Transverse colon (tissue), 4 donors: ENCODE measurements at regions of chr1 and their contacts with region 1.

Region 1: DNA sequence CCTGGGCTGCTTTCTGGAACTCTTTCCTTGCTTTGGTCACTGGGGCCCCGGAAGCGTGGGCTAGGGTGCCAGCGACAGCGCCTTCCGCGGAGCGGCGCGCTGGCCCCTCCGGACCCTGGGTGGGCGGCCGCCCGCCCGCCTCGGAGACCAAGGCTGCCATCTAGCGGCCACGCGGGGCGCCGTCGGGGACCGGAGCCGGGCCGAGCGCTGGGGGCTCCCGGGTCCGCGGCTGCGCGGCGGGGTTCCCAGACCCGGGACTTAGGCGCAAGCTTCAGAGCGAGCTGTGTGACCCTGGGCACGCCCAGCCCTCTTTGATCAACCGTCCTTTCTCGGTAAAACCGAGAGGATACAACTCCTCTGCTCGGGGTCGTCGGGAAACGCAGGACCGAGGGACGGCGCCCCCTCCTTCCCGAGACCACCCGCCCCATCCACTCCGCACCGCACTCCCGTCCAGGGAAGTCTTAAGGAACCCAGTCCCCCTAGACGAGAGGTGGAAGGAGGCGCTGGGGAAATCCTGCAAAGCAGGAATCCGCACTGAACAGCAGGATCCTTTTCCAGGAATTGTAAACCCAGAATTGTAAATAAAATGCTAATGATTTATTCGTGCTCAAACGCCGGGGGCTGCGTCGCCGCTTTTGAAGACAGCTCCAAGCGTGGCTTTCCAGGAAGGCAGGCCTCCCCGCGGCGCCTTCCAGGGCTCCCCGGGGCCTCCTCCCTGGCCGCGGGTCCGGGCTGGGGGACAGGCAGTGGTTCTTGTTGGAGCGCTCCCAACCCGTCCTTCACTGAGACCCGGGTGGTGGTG is 41.2 kb downstream of the RRAGC start:
- DNase-seq: peak; percentile 15
- H3K4me3 ChIP-seq: peak overlapping the region in 3 of 4 donors; percentile 6 to 35 (median 15)
- H3K27ac ChIP-seq: no peak overlapping the region
- H3K4me1 ChIP-seq: peaks cover 8 to 19% (median 12%) of the 10 kb centered on the region in 4 donors
- H3K27me3 ChIP-seq: peaks cover 82% of the 10 kb centered on the region
- CTCF ChIP-seq: peak in 4 of 5 experiments; percentile 30 to 76 (median 70)
- EP300 ChIP-seq: no peak
- POLR2A ChIP-seq: no peak

Region 2: GRCh38 chr1:38071312-38072256 is 746.8 kb before region 1 on chr1:
- in situ Hi-C with region 1: loop called in 1 of 4 experiments (anchors 25 kb)
- intact Hi-C with region 1: loop called (anchors 5 kb)
- DNase-seq: no peak
- H3K4me3 ChIP-seq: no peak overlapping the region
- H3K27ac ChIP-seq: no peak overlapping the region
- H3K4me1 ChIP-seq: no peaks in the 10 kb centered on the region
- H3K27me3 ChIP-seq: peaks cover 46% of the 10 kb centered on the region
- CTCF ChIP-seq: peak in 1 of 5 experiments; percentile 13
- EP300 ChIP-seq: no peak
- POLR2A ChIP-seq: no peak

Region 3: GRCh38 chr1:38608202-38608864 is 210.0 kb before region 1 on chr1:
- in situ Hi-C with region 1: loop called in 1 of 4 experiments (anchors 25 kb)
- intact Hi-C with region 1: no loop called
- DNase-seq: no peak
- H3K4me3 ChIP-seq: no peak overlapping the region
- H3K27ac ChIP-seq: no peak overlapping the region
- H3K4me1 ChIP-seq: no peaks in the 10 kb centered on the region
- H3K27me3 ChIP-seq: peaks cover 7% of the 10 kb centered on the region
- CTCF ChIP-seq: peak in 2 of 5 experiments; percentile 31 to 34
- EP300 ChIP-seq: no peak
- POLR2A ChIP-seq: no peak

Region 4: GRCh38 chr1:38852780-38853179 is 34.4 kb after region 1 on chr1:
- in situ Hi-C with region 1: no loop called
- intact Hi-C with region 1: no loop called
- DNase-seq: no peak
- H3K4me3 ChIP-seq: no peak overlapping the region
- H3K27ac ChIP-seq: no peak overlapping the region
- H3K4me1 ChIP-seq: peaks cover 6 to 17% (median 10%) of the 10 kb centered on the region in 4 donors
- H3K27me3 ChIP-seq: no peaks in the 10 kb centered on the region
- CTCF ChIP-seq: no peak
- EP300 ChIP-seq: no peak
- POLR2A ChIP-seq: no peak

Region 5: GRCh38 chr1:39098546-39099250 is 280.3 kb after region 1 on chr1:
- in situ Hi-C with region 1: no loop called
- intact Hi-C with region 1: no loop called
- DNase-seq: peak; percentile 56
- H3K4me3 ChIP-seq: no peak overlapping the region
- H3K27ac ChIP-seq: no peak overlapping the region
- H3K4me1 ChIP-seq: peaks cover 0 to 22% (median 4%) of the 10 kb centered on the region in 4 donors
- H3K27me3 ChIP-seq: no peaks in the 10 kb centered on the region
- CTCF ChIP-seq: peak; percentile 62 to 73 (median 70)
- EP300 ChIP-seq: no peak
- POLR2A ChIP-seq: no peak

Region 6: GRCh38 chr1:39344394-39345154 is 526.2 kb after region 1 on chr1:
- in situ Hi-C with region 1: no loop called
- intact Hi-C with region 1: no loop called
- DNase-seq: peak; percentile 44
- H3K4me3 ChIP-seq: peak overlapping the region in 2 of 4 donors; percentile 20 to 22
- H3K27ac ChIP-seq: peak overlapping the region in 3 of 4 donors; percentile 7 to 47 (median 32)
- H3K4me1 ChIP-seq: peaks cover 0 to 10% (median 2%) of the 10 kb centered on the region in 4 donors
- H3K27me3 ChIP-seq: no peaks in the 10 kb centered on the region
- CTCF ChIP-seq: no peak
- EP300 ChIP-seq: no peak
- POLR2A ChIP-seq: no peak